Activated T-helper 1 cell treated with anti-CD3 and anti-CD28 coated beads, Interleukin-12 subunit alpha, Interleukin-12 subunit beta, Interleukin-2, Interleukin-4 antibody, amounts not matched to agents 30 ng/mL and 10 ng/mL and 1 ng/mL, durations not matched to agents 14 hours and 24 hours and 36 hours (primary cell): ENCODE measurements at regions of chr2 and their contacts with region 1.

Region 1: DNA sequence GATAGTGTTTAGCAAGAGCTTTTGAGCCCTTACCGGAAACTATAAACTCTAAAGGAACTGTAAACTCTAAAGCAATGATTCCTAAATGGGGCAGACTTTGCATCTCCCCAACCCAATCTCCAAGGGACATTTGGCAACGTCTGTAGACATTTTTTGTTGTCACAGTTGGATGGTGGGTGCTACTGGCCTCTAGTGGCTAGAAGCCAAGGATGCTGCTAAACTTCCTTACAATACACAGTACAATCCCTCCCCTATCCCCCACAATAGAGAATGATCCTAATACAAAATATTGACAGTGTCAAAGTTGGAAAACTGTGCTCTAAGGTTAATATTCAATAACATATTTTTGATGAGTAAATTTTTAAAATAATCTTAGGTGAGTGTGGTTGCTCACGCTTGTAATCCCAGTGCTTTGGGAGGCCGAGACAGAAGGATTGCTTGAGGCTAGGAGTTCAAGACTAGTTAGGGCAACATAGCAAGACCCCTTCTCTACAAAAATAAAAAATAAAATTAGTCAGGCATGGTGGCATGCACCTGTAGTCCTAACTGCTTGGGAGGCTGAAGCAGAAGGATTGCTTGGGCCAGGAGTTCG is 66.7 kb downstream of the PTPN4 start:
- DNase-seq: peak; percentile 19
- H3K4me3 Mint-ChIP-seq: no peak overlapping the region
- H3K27ac Mint-ChIP-seq: no peak overlapping the region
- H3K4me1 Mint-ChIP-seq: peaks cover 17% of the 10 kb centered on the region
- H3K27me3 Mint-ChIP-seq: no peaks in the 10 kb centered on the region

Region 2: DNA sequence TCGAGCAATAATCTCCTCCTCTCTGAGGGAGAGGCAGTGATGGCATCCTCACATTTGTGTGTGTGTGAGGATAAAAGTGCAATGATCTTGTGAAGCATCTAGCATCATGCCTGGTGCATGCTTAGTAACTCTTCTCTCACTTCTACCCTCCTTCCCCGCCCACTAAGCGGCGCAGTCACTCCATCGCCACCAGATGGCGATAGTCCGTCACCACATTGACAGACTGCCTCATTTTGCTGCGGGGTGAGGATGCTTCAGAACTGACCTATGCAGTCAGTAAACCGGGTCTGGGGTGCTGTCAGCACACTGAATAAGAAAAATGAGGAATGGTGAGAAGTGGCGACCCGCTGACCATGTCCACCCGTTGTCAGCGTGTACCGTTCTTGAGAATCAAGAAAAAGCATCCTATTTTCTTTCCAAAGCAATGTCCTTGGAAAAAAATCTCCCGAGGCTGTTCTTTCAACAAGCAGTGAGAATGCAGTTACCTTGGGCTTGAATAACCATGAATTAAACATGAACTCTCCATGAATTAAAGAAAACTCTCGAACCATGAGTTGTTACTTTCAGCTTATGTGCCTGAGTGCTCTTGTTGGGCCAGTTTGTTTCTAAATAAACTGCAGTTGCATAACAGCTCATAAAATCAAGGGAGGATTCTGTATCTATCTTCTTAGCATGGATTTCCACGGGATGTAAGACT is 184.8 kb before region 1 on chr2:
- intact Hi-C with region 1: loop called (anchors 2 kb)
- DNase-seq: peak; percentile 60
- H3K4me3 Mint-ChIP-seq: no peak overlapping the region
- H3K27ac Mint-ChIP-seq: no peak overlapping the region
- H3K4me1 Mint-ChIP-seq: peaks cover 7% of the 10 kb centered on the region
- H3K27me3 Mint-ChIP-seq: peaks cover 6% of the 10 kb centered on the region

Region 3: GRCh38 chr2:119702918-119703401 is 123.5 kb before region 1 on chr2:
- intact Hi-C with region 1: loop called (anchors 1 kb)
- DNase-seq: peak; percentile 56
- H3K4me3 Mint-ChIP-seq: no peak overlapping the region
- H3K27ac Mint-ChIP-seq: no peak overlapping the region
- H3K4me1 Mint-ChIP-seq: peaks cover 3% of the 10 kb centered on the region
- H3K27me3 Mint-ChIP-seq: peaks cover 2% of the 10 kb centered on the region

Region 4: DNA sequence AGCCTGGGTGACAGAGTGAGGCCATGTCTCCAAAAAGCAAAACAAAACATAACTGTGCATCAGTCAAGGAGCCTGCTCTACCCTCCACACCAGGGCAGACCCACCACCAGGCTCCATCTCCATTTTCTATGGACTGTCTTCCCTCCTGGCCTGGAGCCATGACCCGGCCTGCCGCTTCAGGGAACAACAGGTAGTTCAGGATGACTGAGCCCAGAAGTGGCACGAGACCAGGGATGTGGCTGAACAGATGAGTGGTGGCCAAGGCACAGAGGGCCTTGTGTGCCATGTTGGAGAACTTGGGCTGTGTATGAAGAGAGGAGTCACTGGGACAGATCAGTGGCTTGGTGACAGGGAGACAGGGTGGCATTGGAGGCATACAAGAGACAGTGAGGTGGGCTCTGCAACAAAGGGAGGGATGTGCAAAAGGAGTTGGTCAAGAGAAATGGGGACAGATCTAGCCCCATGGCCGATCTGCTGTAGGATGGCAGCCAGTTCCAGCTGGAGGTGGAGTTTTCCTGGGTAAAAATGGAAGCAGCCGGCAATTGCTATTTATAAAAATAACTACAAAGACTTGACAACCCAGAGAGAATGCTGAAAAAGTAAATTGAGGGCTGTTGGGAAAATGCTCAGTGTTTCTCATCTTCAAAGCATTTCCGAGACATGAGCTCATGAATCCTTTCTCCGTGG is 112.5 kb before region 1 on chr2:
- intact Hi-C with region 1: no loop called
- DNase-seq: no peak
- H3K4me3 Mint-ChIP-seq: no peak overlapping the region
- H3K27ac Mint-ChIP-seq: peak overlapping the region; percentile 7
- H3K4me1 Mint-ChIP-seq: peaks cover 4% of the 10 kb centered on the region
- H3K27me3 Mint-ChIP-seq: peaks cover 4% of the 10 kb centered on the region

Region 5: GRCh38 chr2:119753041-119753929 is 73.2 kb before region 1 on chr2:
- intact Hi-C with region 1: loop called (anchors 1 kb)
- DNase-seq: peak; percentile 6
- H3K4me3 Mint-ChIP-seq: no peak overlapping the region
- H3K27ac Mint-ChIP-seq: no peak overlapping the region
- H3K4me1 Mint-ChIP-seq: peaks cover 12% of the 10 kb centered on the region
- H3K27me3 Mint-ChIP-seq: peaks cover 20% of the 10 kb centered on the region

Region 6: GRCh38 chr2:119766944-119767343 is 59.5 kb before region 1 on chr2:
- intact Hi-C with region 1: no loop called
- DNase-seq: no peak
- H3K4me3 Mint-ChIP-seq: no peak overlapping the region
- H3K27ac Mint-ChIP-seq: no peak overlapping the region
- H3K4me1 Mint-ChIP-seq: peaks cover 17% of the 10 kb centered on the region
- H3K27me3 Mint-ChIP-seq: no peaks in the 10 kb centered on the region